ENCODE measurements at regions of chr3 and their contacts with region 1.

Region 1: GRCh38 chr3:148604270-148605085 is 93.2 kb upstream of the AGTR1 start:
- DNase-seq: peak in 1 of 2 experiments; percentile 12
- H3K4me3 ChIP-seq: no peak overlapping the region
- H3K4me3 Mint-ChIP-seq: no peak overlapping the region
- H3K27ac Mint-ChIP-seq: no peak overlapping the region
- H3K4me1 ChIP-seq: peaks cover 54% of the 10 kb centered on the region
- H3K4me1 Mint-ChIP-seq: peaks cover 31% of the 10 kb centered on the region
- H3K27me3 ChIP-seq: no peaks in the 10 kb centered on the region
- H3K27me3 Mint-ChIP-seq: no peaks in the 10 kb centered on the region
- CTCF ChIP-seq: no peak

Region 2: DNA sequence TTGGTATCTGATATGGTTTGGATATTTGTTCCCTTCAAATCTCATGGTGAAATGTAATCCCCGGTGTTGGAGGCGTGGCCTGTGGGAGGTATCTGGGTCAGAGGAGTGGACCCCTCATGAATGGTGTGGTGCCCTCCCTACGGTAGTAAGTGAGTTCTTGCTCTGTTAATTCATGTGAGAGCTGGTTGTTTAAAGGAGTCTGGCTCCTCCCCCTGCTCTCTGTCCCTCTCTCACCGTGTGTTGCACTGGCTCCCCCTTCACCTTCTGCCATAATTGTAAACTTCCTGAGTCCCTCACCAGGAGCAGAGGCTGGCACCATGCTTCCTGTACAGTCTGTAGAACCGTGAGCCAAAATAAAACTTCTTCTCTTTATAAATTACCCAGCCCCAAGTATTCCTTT is 153.7 kb before region 1 on chr3:
- CTCF ChIA-PET with region 1: no interaction called
- POLR2A ChIA-PET with region 1: no interaction called
- intact Hi-C with region 1: loop called (anchors 5 kb)
- DNase-seq: peak in 1 of 2 experiments; percentile 29
- H3K4me3 ChIP-seq: no peak overlapping the region
- H3K4me3 Mint-ChIP-seq: no peak overlapping the region
- H3K27ac Mint-ChIP-seq: no peak overlapping the region
- H3K4me1 ChIP-seq: peaks cover 10% of the 10 kb centered on the region
- H3K4me1 Mint-ChIP-seq: peaks cover 16% of the 10 kb centered on the region
- H3K27me3 ChIP-seq: no peaks in the 10 kb centered on the region
- H3K27me3 Mint-ChIP-seq: no peaks in the 10 kb centered on the region
- CTCF ChIP-seq: no peak

Region 3: GRCh38 chr3:148500881-148501280 is 103.6 kb before region 1 on chr3:
- CTCF ChIA-PET with region 1: no interaction called
- POLR2A ChIA-PET with region 1: no interaction called
- intact Hi-C with region 1: loop called (anchors 1 kb)
- DNase-seq: peak in 1 of 2 experiments; percentile 2
- H3K4me3 ChIP-seq: no peak overlapping the region
- H3K4me3 Mint-ChIP-seq: no peak overlapping the region
- H3K27ac Mint-ChIP-seq: no peak overlapping the region
- H3K4me1 ChIP-seq: peaks cover 16% of the 10 kb centered on the region
- H3K4me1 Mint-ChIP-seq: peaks cover 11% of the 10 kb centered on the region
- H3K27me3 ChIP-seq: no peaks in the 10 kb centered on the region
- H3K27me3 Mint-ChIP-seq: no peaks in the 10 kb centered on the region
- CTCF ChIP-seq: no peak

Region 4: DNA sequence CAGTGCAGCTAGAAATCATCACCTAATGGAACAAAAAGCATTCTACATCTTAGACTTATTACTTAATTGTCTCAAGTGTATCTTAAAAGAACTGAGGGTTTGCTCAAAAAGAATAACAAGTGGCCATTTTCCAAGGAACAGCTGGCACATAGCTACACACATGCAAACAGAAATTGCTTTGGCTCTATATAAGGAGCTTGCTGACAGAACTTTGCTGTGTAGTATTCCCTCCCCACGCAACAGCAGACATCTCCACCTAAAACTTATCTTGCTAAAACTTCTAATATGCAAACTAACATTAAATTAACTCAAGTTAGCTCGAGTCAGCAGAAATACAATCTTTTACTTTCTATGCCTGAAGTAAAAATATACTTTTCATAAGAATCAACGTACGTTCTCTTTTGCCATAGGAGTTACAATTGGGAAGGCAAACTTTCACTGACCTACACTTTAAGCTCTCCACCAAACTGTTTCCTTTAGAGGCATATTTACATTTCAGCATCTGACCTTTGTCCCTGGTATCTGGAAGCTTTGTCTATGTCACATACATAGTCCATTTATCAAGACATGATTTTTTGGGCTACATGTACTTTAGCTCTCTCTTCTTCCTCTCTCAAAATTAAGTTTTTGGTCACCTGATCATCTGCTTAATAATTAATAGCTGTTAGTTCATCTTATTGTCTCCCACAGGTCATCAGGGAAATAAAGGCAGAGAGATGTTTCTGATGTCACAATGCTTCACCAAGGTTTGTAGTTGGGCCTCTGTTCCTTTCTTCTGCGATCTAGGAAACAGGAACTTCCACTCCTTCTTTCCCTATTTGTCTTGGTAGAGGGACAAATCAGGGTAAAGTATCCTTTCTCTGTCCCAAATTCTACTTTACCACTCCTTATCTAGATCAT is 70.1 kb before region 1 on chr3:
- CTCF ChIA-PET with region 1: interaction called, 3 read pairs
- POLR2A ChIA-PET with region 1: interaction called, 3 read pairs
- intact Hi-C with region 1: loop called (anchors 1 kb)
- DNase-seq: peak in 1 of 2 experiments; percentile 24
- H3K4me3 ChIP-seq: no peak overlapping the region
- H3K4me3 Mint-ChIP-seq: peak overlapping the region; percentile 28
- H3K27ac Mint-ChIP-seq: peak overlapping the region; percentile 83
- H3K4me1 ChIP-seq: peaks cover 18% of the 10 kb centered on the region
- H3K4me1 Mint-ChIP-seq: peaks cover 13% of the 10 kb centered on the region
- H3K27me3 ChIP-seq: no peaks in the 10 kb centered on the region
- H3K27me3 Mint-ChIP-seq: no peaks in the 10 kb centered on the region
- CTCF ChIP-seq: no peak

Region 5: DNA sequence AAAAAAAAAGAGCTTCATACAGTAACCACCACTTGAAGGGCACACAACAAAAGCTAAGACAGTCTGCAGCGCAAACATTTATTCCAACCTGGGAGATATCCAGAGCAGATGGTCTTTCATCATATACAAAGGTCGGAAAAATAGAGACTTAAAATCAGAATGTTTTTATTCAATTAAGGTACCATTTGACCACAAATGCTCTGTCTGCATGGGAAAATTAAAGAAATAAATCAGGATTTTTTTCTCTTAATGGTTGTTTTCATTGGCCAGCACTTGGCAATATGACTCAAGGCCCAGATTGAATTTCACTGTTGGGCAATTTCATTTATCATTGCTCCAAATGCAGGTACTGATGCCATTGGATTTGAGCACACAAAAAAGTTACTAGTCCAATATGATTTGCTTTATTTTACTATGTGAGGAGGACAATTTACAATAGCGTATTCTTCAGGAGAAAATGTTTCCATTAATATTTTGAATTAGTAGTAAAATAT is 52.7 kb before region 1 on chr3:
- CTCF ChIA-PET with region 1: no interaction called
- POLR2A ChIA-PET with region 1: no interaction called
- intact Hi-C with region 1: loop called (anchors 5 kb)
- DNase-seq: no peak
- H3K4me3 ChIP-seq: no peak overlapping the region
- H3K4me3 Mint-ChIP-seq: no peak overlapping the region
- H3K27ac Mint-ChIP-seq: no peak overlapping the region
- H3K4me1 ChIP-seq: no peaks in the 10 kb centered on the region
- H3K4me1 Mint-ChIP-seq: no peaks in the 10 kb centered on the region
- H3K27me3 ChIP-seq: no peaks in the 10 kb centered on the region
- H3K27me3 Mint-ChIP-seq: no peaks in the 10 kb centered on the region
- CTCF ChIP-seq: no peak

Region 6: GRCh38 chr3:148631124-148631903 is 26.8 kb after region 1 on chr3:
- CTCF ChIA-PET with region 1: no interaction called
- POLR2A ChIA-PET with region 1: no interaction called
- intact Hi-C with region 1: loop called (anchors 1 kb)
- DNase-seq: peak in 1 of 2 experiments; percentile 41
- H3K4me3 ChIP-seq: no peak overlapping the region
- H3K4me3 Mint-ChIP-seq: no peak overlapping the region
- H3K27ac Mint-ChIP-seq: no peak overlapping the region
- H3K4me1 ChIP-seq: peaks cover 7% of the 10 kb centered on the region; the same call in 1 of the 2 replicates
- H3K4me1 Mint-ChIP-seq: peaks cover 7% of the 10 kb centered on the region
- H3K27me3 ChIP-seq: no peaks in the 10 kb centered on the region
- H3K27me3 Mint-ChIP-seq: no peaks in the 10 kb centered on the region
- CTCF ChIP-seq: peak; percentile 57 to 58